ENCODE measurements at regions of chrX and their contacts with region 1.

Region 1: DNA sequence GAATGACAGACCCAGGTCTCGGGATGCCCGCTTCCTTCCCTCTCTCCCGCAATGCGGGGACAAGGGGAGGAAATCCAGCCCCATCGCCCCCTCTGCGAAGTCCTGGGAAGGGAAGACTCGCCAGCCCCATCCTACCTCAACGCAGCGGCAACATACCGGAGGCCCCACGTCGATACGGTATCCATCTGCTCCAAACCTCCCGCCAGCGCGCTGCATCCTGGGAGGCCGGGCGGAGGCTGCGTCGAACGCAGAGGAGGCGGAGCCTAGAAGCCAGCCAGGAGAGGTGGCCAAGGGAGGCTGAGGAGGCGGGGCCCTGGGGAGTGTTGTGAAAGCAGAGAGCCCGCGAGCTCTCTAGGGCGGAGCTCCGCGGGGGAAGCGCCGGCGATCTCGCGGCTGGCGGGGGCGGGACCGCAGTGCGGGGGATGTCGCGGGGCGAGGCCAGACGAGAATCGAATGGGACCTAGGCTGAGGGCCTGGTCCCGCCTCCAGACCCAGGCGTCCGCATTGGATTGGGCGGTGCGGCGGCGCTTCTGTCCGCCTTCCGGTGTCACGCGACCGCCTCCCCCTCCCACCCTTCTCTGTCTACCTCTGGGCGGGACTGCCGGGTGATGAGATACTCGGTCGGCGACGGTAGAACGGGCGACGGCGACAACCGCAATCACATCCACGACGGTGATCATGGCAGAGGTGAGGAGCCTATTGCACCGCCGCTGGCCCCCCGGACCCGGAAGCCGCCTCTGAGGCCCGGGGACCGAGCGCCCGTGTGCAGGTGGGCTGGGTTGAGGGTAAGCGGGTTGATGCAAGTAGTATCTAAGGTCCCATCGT is at the starts of genes FANCB and MOSPD2:
- DNase-seq: peak; percentile 89 to 96 (median 96)
- H3K4me3 ChIP-seq: peak within 1 kb of the TSS; percentile 76 to 77
- H3K4me3 Mint-ChIP-seq: peak within 1 kb of the TSS; percentile 83 to 92 (median 88)
- H3K27ac ChIP-seq: peak within 1 kb of the TSS; percentile 78
- H3K27ac Mint-ChIP-seq: peak within 1 kb of the TSS; percentile 79 to 93 (median 91)
- H3K4me1 ChIP-seq: peaks cover 12% of the 10 kb centered on the region
- H3K4me1 Mint-ChIP-seq: peaks cover 4 to 27% (median 9%) of the 10 kb centered on the region in 4 donors
- H3K27me3 ChIP-seq: no peaks in the 10 kb centered on the region
- H3K27me3 Mint-ChIP-seq: no peaks in the 10 kb centered on the region
- total RNA-seq, gene FANCB: 3.0 to 4.8 TPM
- total RNA-seq, gene MOSPD2: 14.0 to 15.2 TPM

Region 2: GRCh38 chrX:13653022-13653693 is 1219.9 kb before region 1 on chrX and contains the start of gene TCEANC:
- CTCF ChIA-PET with region 1: no interaction called
- POLR2A ChIA-PET with region 1: no interaction called
- intact Hi-C with region 1: loop called (anchors 2 kb)
- DNase-seq: peak; percentile 95 to 97 (median 96)
- H3K4me3 ChIP-seq: peak within 1 kb of the TSS; percentile 47 to 75
- H3K4me3 Mint-ChIP-seq: peak within 1 kb of the TSS; percentile 91 to 97 (median 96)
- H3K27ac ChIP-seq: peak within 1 kb of the TSS; percentile 94
- H3K27ac Mint-ChIP-seq: peak within 1 kb of the TSS; percentile 96 to 99 (median 99)
- H3K4me1 ChIP-seq: peaks cover 22% of the 10 kb centered on the region
- H3K4me1 Mint-ChIP-seq: peaks cover 11 to 33% (median 18%) of the 10 kb centered on the region in 4 donors
- H3K27me3 ChIP-seq: no peaks in the 10 kb centered on the region
- H3K27me3 Mint-ChIP-seq: no peaks in the 10 kb centered on the region
- total RNA-seq, gene TCEANC: 14.6 to 16.3 TPM

Region 3: DNA sequence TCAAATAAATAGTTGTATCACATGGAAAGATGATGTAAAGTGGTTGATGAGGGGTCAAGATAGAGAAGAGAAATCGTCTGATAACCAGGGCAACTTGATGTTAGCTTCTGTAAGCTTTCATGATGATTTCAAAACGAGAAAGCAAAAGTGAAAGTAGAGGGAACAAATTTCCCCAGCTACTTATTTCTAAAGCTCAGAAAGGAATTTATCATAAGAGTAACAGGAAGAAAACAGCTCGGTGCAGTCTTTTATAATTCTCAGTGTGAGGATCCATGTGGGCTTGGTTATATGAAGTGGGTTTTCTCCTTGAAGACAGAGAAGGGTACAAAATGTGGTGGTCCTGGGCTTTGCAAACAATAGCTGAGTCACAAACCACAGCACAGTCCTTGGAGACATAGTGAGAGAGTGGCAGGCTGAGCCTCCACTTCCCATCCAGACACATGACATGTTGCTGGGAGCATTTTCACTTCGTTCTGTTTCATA is 375.8 kb before region 1 on chrX:
- CTCF ChIA-PET with region 1: no interaction called
- POLR2A ChIA-PET with region 1: no interaction called
- intact Hi-C with region 1: loop called (anchors 10 kb)
- DNase-seq: peak in 4 of 5 donors; percentile 21 to 33 (median 24)
- H3K4me3 ChIP-seq: peak overlapping the region; percentile 34 to 43
- H3K4me3 Mint-ChIP-seq: peak overlapping the region; percentile 77 to 96 (median 84)
- H3K27ac ChIP-seq: peak overlapping the region; percentile 12
- H3K27ac Mint-ChIP-seq: peak overlapping the region; percentile 84 to 94 (median 87)
- H3K4me1 ChIP-seq: peaks cover 13% of the 10 kb centered on the region
- H3K4me1 Mint-ChIP-seq: peaks cover 12 to 27% (median 21%) of the 10 kb centered on the region in 4 donors
- H3K27me3 ChIP-seq: no peaks in the 10 kb centered on the region
- H3K27me3 Mint-ChIP-seq: no peaks in the 10 kb centered on the region

Region 4: GRCh38 chrX:14779589-14779988 is 93.5 kb before region 1 on chrX:
- CTCF ChIA-PET with region 1: no interaction called
- POLR2A ChIA-PET with region 1: no interaction called
- intact Hi-C with region 1: no loop called
- DNase-seq: no peak
- H3K4me3 ChIP-seq: no peak overlapping the region
- H3K4me3 Mint-ChIP-seq: no peak overlapping the region
- H3K27ac ChIP-seq: no peak overlapping the region
- H3K27ac Mint-ChIP-seq: no peak overlapping the region
- H3K4me1 ChIP-seq: no peaks in the 10 kb centered on the region
- H3K4me1 Mint-ChIP-seq: no peaks in the 10 kb centered on the region
- H3K27me3 ChIP-seq: no peaks in the 10 kb centered on the region
- H3K27me3 Mint-ChIP-seq: no peaks in the 10 kb centered on the region

Region 5: GRCh38 chrX:14916017-14916674 is 43.1 kb after region 1 on chrX:
- CTCF ChIA-PET with region 1: no interaction called
- POLR2A ChIA-PET with region 1: no interaction called
- intact Hi-C with region 1: no loop called
- DNase-seq: no peak
- H3K4me3 ChIP-seq: no peak overlapping the region
- H3K4me3 Mint-ChIP-seq: no peak overlapping the region
- H3K27ac ChIP-seq: no peak overlapping the region
- H3K27ac Mint-ChIP-seq: no peak overlapping the region
- H3K4me1 ChIP-seq: no peaks in the 10 kb centered on the region
- H3K4me1 Mint-ChIP-seq: no peaks in the 10 kb centered on the region
- H3K27me3 ChIP-seq: no peaks in the 10 kb centered on the region
- H3K27me3 Mint-ChIP-seq: no peaks in the 10 kb centered on the region

Region 6: GRCh38 chrX:15143050-15143824 is 270.2 kb after region 1 on chrX:
- CTCF ChIA-PET with region 1: no interaction called
- POLR2A ChIA-PET with region 1: no interaction called
- intact Hi-C with region 1: loop called (anchors 10 kb)
- DNase-seq: peak; percentile 31 to 50 (median 37)
- H3K4me3 ChIP-seq: no peak overlapping the region
- H3K4me3 Mint-ChIP-seq: peak overlapping the region in 6 of 8 donors; percentile 13 to 74 (median 32)
- H3K27ac ChIP-seq: no peak overlapping the region
- H3K27ac Mint-ChIP-seq: peak overlapping the region in 4 of 7 donors; percentile 11 to 80 (median 66)
- H3K4me1 ChIP-seq: peaks cover 11% of the 10 kb centered on the region
- H3K4me1 Mint-ChIP-seq: peaks cover 12 to 17% (median 15%) of the 10 kb centered on the region in 4 donors
- H3K27me3 ChIP-seq: no peaks in the 10 kb centered on the region
- H3K27me3 Mint-ChIP-seq: no peaks in the 10 kb centered on the region

Region 7: GRCh38 chrX:15335135-15336022 is 462.3 kb after region 1 on chrX and contains the start of gene PIGA:
- CTCF ChIA-PET with region 1: no interaction called
- POLR2A ChIA-PET with region 1: no interaction called
- intact Hi-C with region 1: loop called (anchors 1 kb)
- DNase-seq: peak; percentile 87 to 97 (median 93)
- H3K4me3 ChIP-seq: peak within 1 kb of the TSS; percentile 73 to 84
- H3K4me3 Mint-ChIP-seq: peak within 1 kb of the TSS; percentile 90 to 96 (median 91)
- H3K27ac ChIP-seq: peak within 1 kb of the TSS; percentile 89
- H3K27ac Mint-ChIP-seq: peak within 1 kb of the TSS; percentile 95 to 97 (median 96)
- H3K4me1 ChIP-seq: peaks cover 20% of the 10 kb centered on the region
- H3K4me1 Mint-ChIP-seq: peaks cover 4 to 28% (median 8%) of the 10 kb centered on the region in 4 donors
- H3K27me3 ChIP-seq: peaks cover 5% of the 10 kb centered on the region
- H3K27me3 Mint-ChIP-seq: peaks cover 4 to 6% of the 10 kb centered on the region in 2 donors
- total RNA-seq, gene PIGA: 27.8 to 32.3 TPM

Region 8: GRCh38 chrX:16654093-16654492 is 1781.0 kb after region 1 on chrX:
- CTCF ChIA-PET with region 1: no interaction called
- POLR2A ChIA-PET with region 1: no interaction called
- intact Hi-C with region 1: no loop called
- DNase-seq: no peak
- H3K4me3 ChIP-seq: no peak overlapping the region
- H3K4me3 Mint-ChIP-seq: no peak overlapping the region
- H3K27ac ChIP-seq: no peak overlapping the region
- H3K27ac Mint-ChIP-seq: no peak overlapping the region
- H3K4me1 ChIP-seq: no peaks in the 10 kb centered on the region
- H3K4me1 Mint-ChIP-seq: no peaks in the 10 kb centered on the region
- H3K27me3 ChIP-seq: no peaks in the 10 kb centered on the region
- H3K27me3 Mint-ChIP-seq: no peaks in the 10 kb centered on the region

Region 9: GRCh38 chrX:16719334-16720084 is 1846.4 kb after region 1 on chrX and contains the start of gene SYAP1:
- CTCF ChIA-PET with region 1: no interaction called
- POLR2A ChIA-PET with region 1: no interaction called
- intact Hi-C with region 1: loop called (anchors 10 kb)
- DNase-seq: peak; percentile 91 to 100 (median 97)
- H3K4me3 ChIP-seq: peak within 1 kb of the TSS; percentile 54 to 84
- H3K4me3 Mint-ChIP-seq: peak within 1 kb of the TSS; percentile 89 to 99 (median 95)
- H3K27ac ChIP-seq: peak within 1 kb of the TSS; percentile 95
- H3K27ac Mint-ChIP-seq: peak within 1 kb of the TSS; percentile 99 to 100 (median 99)
- H3K4me1 ChIP-seq: peaks cover 8% of the 10 kb centered on the region
- H3K4me1 Mint-ChIP-seq: peaks cover 13 to 55% (median 37%) of the 10 kb centered on the region in 4 donors
- H3K27me3 ChIP-seq: no peaks in the 10 kb centered on the region
- H3K27me3 Mint-ChIP-seq: no peaks in the 10 kb centered on the region
- total RNA-seq, gene SYAP1: 13.9 to 15.4 TPM